ENCODE measurements at regions of chr10 and their contacts with region 1.

Region 1: DNA sequence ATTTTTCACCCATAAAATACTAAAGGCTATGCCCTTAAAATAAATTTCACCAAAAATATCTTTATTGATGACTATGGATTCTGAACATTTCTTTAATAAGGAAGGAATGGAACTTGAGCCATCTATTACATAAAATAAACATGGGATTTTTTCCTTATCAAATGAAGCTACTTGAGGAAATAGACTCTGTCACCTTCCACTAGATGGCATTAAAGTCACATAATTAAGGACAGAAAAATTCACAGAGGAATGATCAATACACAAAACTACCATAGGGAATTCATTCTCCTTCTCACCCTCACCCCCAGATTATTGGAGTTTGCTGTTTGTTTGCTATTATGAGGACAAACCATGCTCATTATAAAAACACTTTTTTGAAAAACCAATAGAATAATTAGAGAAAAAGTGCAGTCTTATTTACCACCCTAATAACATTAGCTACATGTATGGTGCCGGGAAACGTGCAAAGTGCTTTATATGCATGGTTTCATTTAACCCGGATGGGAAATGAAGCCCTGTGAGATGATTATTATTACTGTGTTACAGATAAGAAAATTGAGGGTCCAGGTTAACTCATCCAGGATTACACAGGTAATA is 21.1 kb upstream of the FOXI2 start:
- DNase-seq: no peak
- ATAC-seq: no peak
- H3K4me3 ChIP-seq: no peak overlapping the region
- H3K27ac ChIP-seq: no peak overlapping the region
- H3K4me1 ChIP-seq: no peaks in the 10 kb centered on the region
- H3K27me3 ChIP-seq: no peaks in the 10 kb centered on the region
- CTCF ChIP-seq: peak in 5 of 7 experiments; percentile 26 to 66 (median 52)
- POLR2A ChIP-seq: no peak

Region 2: DNA sequence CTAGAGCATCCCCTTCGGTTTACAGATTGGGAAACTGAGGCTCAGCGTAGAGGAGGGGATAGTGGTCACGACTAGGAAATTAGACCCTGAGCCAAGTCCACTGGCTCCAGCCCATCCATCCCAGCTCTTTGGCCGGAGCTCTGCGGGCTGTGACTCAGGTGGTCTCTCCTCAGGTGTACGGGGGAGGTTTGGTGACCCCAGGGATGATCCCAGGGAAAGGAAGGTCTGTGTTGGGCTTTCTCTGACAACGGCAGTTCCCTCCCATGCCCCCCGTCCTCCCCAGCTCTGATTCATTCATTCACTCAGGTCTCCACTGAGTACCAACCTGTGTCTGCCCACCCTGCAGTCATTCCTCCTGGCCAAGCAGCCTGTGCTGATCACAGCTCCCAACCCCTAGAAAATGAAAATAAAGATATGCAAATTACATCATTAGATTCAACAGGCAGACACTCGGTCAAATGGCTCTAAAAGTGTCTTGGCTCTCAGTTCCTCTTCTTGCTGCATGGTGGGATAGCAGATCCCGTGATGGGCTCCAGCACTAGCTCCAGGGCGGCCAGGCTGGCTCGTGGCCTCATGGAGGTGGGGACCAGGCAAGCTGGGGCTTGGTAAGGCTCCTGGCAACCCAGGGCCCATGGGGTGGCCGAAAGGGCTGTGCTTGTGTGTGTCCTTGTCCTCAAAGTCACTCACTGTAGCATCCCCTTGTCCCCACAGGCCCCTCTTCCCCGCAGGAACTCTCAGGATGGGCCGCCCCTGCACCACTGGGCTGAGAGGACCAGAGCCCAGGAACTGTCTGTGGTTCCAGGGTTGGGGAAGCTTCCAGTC is 139.1 kb after region 1 on chr10:
- intact Hi-C with region 1: loop called (anchors 5 kb)
- DNase-seq: no peak
- ATAC-seq: no peak
- H3K4me3 ChIP-seq: no peak overlapping the region
- H3K27ac ChIP-seq: no peak overlapping the region
- H3K4me1 ChIP-seq: no peaks in the 10 kb centered on the region
- H3K27me3 ChIP-seq: no peaks in the 10 kb centered on the region
- CTCF ChIP-seq: no peak
- POLR2A ChIP-seq: no peak

Measured in body of pancreas (tissue), 4 donors.